ENCODE measurements at regions of chr5 and their contacts with region 1.

Region 1: DNA sequence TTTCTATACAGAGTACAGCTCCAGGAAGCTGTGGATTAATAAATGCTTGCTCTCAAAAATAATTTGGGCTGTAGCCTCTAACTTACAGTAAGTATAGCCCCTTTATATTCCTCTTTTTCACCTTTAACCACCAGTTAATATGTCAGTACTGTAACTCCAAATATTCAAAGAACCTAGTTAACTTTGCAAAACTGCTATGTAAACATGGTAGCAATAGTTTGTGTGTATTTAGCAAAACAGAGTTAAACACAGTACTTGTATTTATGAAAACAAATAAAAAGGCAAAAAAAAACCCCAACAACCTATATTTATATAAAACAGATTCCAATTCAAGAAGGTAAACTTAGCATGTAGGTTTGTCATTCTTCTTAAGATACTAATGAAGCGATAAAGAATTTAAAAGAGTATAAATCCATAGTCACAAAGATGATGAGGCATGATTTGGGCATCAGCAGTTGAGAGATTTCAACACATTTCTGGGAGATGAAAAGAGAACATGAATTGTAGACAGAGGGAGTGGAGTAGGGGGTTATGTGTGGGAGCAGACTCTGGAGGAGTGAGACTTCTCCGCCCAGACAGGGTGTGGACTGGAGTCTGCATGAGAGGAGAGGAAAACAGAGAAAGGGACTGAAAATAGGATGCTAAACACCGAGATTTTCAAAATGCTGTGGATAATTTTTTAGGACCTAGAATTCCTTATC is 47.0 kb upstream of the F2RL1 start:
- DNase-seq: no peak
- ATAC-seq: peak; percentile 27; the same call in 1 of the 2 replicates
- H3K4me3 ChIP-seq: no peak overlapping the region
- H3K27ac ChIP-seq: no peak overlapping the region
- H3K4me1 ChIP-seq: 0 out of 2 replicates have a peak, but pooled peaks cover 5% of the 10 kb centered on the region
- H3K27me3 ChIP-seq: no peaks in the 10 kb centered on the region
- CTCF ChIP-seq: no peak

Region 2: DNA sequence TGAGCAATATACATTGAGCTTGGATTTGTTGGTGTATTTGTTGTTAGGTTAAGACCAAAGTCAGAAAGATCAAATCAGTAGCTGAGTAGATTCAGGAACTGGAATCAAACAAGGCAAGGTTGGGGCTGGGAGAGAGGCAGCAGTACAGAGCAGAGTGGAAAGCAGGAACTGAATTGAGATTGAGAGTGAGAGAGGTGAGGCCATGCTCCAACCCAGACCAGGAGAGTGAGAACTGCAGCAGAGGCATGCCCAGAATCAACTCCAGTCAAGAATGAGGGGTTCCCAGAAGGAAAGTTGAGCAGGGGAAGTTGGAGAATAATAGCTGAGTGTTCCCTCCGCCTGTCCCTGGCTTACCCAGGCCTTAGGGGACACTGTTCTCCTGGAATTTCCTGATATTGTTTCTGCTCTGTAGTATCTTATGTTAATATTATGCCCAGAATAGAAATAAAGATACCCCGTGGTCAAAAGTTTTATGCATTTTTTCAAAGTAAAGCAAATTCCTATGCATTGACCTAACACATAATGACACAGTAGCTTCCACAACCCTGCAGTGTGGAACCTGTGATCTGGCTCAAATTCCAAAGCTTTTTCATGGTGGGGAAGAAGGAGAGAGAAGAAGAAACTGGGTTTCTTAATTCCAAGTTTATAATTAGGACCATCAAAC is 606.0 kb before region 1 on chr5:
- CTCF ChIA-PET with region 1: no interaction called
- POLR2A ChIA-PET with region 1: no interaction called
- intact Hi-C with region 1: no loop called
- DNase-seq: no peak
- ATAC-seq: no peak
- H3K4me3 ChIP-seq: no peak overlapping the region
- H3K27ac ChIP-seq: no peak overlapping the region
- H3K4me1 ChIP-seq: no peaks in the 10 kb centered on the region
- H3K27me3 ChIP-seq: peaks cover 10% of the 10 kb centered on the region; the same call in 1 of the 2 replicates
- CTCF ChIP-seq: no peak

Region 3: GRCh38 chr5:76641514-76642120 is 130.2 kb before region 1 on chr5:
- CTCF ChIA-PET with region 1: no interaction called
- POLR2A ChIA-PET with region 1: no interaction called
- intact Hi-C with region 1: loop called (anchors 2 kb)
- DNase-seq: peak; percentile 73
- ATAC-seq: 0 out of 2 replicates have a peak, but pooled peaks have one; percentile 51
- H3K4me3 ChIP-seq: no peak overlapping the region
- H3K27ac ChIP-seq: no peak overlapping the region
- H3K4me1 ChIP-seq: no peaks in the 10 kb centered on the region
- H3K27me3 ChIP-seq: no peaks in the 10 kb centered on the region
- CTCF ChIP-seq: peak; percentile 84

Region 4: GRCh38 chr5:77791356-77791755 is 1019.5 kb after region 1 on chr5:
- CTCF ChIA-PET with region 1: interaction called, 16 read pairs
- POLR2A ChIA-PET with region 1: no interaction called
- intact Hi-C with region 1: no loop called
- DNase-seq: no peak
- ATAC-seq: no peak
- H3K4me3 ChIP-seq: no peak overlapping the region
- H3K27ac ChIP-seq: no peak overlapping the region
- H3K4me1 ChIP-seq: no peaks in the 10 kb centered on the region
- H3K27me3 ChIP-seq: 0 out of 2 replicates have a peak, but pooled peaks cover 4% of the 10 kb centered on the region
- CTCF ChIP-seq: no peak

Measured in PC-3 (cell line).